GM10248 (cell line): ENCODE measurements at regions of chr15 and their contacts with region 1.

Region 1: DNA sequence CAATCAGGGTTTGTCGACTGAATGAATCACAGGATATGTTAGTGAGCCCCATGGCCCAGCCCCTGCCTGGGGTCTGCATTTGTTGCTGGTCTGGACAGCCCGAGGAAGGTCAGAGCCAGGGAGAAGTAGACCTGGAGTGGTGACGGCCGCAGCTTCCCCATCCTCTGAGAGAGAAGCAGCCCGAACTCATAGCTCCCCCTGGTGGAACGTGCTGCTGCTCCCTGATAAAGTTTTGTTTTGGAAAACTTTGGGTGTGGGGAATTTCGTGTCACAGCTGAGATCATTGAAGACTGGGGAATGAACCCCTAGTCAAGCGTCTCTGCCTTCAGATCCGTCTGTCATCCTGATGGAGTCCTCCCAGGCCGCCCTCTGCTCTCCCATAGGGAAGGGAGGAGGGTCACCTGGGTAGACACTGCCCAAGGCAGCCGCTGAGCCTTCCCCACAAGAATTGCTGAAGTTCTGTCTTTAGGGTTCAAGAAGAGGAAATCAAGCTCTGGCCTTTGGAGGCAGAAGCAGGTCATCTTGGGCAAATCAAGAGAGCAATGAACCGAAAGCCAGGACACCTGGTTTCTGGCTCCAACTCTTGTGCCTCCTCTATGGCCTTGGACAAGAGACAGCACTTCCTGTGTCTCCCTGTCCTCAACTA is 60.5 kb downstream of the GLDN start:
- DNase-seq: peak; percentile 63
- CTCF ChIP-seq: peak; percentile 63

Region 2: GRCh38 chr15:51162865-51163762 is 238.9 kb before region 1 on chr15:
- CTCF ChIA-PET with region 1: interaction called, 61 read pairs
- POLR2A ChIA-PET with region 1: no interaction called
- DNase-seq: peak; percentile 85
- CTCF ChIP-seq: peak; percentile 94

Region 3: GRCh38 chr15:51227940-51228783 is 173.8 kb before region 1 on chr15:
- CTCF ChIA-PET with region 1: interaction called, 17 read pairs
- POLR2A ChIA-PET with region 1: no interaction called
- DNase-seq: peak; percentile 72
- CTCF ChIP-seq: no peak

Region 4: DNA sequence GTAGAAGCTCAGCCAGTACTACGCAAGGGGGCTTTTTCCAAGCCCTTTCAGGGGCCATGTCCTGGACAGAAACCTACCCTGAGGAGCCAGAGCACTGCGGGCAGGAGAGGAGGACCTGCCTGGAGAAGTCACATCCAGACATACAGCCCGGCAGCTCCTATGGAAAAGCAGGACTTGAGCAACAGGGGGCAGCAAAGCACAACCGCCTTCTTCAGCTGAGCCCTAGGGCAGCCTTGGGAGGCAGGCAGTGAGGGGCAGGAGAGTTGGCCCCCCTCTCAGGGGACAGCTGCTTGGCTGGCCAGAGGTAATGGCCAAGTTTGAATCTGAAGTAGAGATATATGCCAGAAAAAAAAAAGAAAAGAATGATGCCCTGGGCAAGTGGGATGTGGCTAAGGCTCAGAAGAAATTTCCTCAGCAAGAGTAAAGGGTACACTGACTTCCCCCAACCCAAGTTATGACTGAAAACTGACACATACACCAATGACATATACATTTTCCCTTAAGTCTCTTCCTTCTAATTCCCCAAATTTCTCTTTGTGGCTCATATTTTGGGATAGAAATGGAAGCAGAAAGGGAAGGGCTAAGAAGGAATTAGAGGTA is 120.5 kb before region 1 on chr15:
- CTCF ChIA-PET with region 1: interaction called, 39 read pairs
- POLR2A ChIA-PET with region 1: no interaction called
- DNase-seq: peak; percentile 69
- CTCF ChIP-seq: peak; percentile 82

Region 5: DNA sequence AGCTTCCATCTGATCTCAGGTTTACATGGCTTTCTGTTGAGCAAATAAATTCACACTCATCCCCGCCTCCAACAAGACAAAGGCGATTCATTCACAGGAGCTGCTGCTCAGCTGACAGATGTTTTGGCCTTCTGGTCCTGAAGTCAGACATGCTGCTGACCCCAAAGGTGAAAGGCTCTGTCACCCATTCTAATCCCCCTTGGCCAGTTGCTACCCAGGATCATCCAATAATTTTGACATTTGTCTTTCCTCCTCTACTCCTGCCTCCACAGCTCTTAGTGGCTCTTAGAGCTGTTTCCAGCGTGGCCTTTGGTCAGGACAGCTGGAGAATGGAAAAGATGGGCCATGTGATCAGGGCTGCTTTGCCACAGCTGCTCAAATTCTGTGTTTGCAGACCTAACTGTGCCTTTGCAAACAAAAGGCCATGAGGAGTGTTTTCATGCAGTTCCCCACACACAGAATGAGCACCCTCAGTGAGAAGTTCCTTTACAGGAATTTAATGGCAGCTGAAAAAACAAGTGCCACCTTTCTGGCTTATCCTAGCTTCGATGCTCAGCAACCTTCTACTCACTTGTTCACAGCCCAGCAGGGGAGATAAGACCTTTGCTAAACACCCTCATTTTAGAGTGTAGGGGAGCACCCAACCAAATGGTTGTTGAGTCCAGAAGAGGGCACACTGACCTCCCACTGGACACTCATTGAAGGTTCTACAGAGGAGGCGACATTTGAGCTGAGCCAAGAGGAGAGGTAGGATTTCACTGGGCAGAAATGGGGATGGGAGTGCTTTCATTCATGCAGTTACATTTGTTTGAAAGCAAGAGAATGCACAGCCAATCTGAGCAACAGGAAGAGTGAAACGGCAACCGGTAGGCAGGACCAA is 102.6 kb before region 1 on chr15:
- CTCF ChIA-PET with region 1: interaction called, 10 read pairs
- POLR2A ChIA-PET with region 1: no interaction called
- DNase-seq: no peak
- CTCF ChIP-seq: no peak

Region 6: GRCh38 chr15:51390966-51391432 is 11.0 kb before region 1 on chr15:
- CTCF ChIA-PET with region 1: interaction called, 33 read pairs
- POLR2A ChIA-PET with region 1: no interaction called
- DNase-seq: no peak
- CTCF ChIP-seq: no peak

Region 7: DNA sequence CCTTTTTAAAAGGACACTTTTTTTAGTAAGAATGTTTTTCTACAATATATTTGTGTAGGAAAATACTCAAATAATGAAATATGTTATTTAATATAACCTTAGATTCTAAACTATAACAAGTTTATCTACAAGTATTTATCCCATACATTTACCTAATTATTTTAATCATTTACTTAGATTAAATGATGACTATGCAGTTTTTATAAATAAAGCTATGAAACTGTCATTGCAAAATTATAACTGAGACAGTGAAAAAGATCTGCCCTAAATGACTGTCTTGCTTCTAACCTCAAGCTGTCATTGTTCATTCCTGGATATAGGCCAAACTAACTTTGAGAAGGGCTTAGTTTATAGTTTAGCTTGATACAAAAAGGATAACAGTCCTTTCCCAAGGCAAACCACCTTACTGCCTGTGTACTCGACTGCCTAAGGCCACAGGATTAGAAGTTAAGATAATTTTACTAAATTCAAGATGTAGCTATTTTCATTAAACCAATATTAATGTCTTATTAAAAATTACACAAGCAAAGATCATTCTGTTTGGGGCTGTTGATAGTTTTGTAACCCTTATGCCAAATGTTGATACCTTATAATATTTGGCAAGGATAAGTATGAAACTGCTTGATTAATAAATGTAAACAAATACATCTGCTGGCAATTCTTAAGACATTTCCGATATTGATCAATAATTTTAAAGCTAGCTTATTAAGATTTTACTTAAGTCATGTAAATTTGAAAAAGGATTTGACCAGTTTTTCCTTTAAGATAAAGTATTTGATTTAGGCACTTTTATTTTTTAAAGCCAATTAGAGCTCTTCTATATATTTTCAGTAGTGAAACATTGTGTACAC is 23.7 kb after region 1 on chr15:
- CTCF ChIA-PET with region 1: interaction called, 15 read pairs
- POLR2A ChIA-PET with region 1: no interaction called
- DNase-seq: no peak
- CTCF ChIP-seq: no peak